ENCODE measurements at regions of chr13 and their contacts with region 1.

Region 1: GRCh38 chr13:46553886-46554858 is 1.2 kb downstream of the LRCH1 start:
- DNase-seq: peak; percentile 88
- ATAC-seq: peak; percentile 70
- H3K4me3 ChIP-seq: peak overlapping the region; percentile 98
- H3K27ac ChIP-seq: peak overlapping the region; percentile 90
- H3K4me1 ChIP-seq: peaks cover 15% of the 10 kb centered on the region
- H3K27me3 ChIP-seq: no peaks in the 10 kb centered on the region
- CTCF ChIP-seq: peak; percentile 37

Region 2: DNA sequence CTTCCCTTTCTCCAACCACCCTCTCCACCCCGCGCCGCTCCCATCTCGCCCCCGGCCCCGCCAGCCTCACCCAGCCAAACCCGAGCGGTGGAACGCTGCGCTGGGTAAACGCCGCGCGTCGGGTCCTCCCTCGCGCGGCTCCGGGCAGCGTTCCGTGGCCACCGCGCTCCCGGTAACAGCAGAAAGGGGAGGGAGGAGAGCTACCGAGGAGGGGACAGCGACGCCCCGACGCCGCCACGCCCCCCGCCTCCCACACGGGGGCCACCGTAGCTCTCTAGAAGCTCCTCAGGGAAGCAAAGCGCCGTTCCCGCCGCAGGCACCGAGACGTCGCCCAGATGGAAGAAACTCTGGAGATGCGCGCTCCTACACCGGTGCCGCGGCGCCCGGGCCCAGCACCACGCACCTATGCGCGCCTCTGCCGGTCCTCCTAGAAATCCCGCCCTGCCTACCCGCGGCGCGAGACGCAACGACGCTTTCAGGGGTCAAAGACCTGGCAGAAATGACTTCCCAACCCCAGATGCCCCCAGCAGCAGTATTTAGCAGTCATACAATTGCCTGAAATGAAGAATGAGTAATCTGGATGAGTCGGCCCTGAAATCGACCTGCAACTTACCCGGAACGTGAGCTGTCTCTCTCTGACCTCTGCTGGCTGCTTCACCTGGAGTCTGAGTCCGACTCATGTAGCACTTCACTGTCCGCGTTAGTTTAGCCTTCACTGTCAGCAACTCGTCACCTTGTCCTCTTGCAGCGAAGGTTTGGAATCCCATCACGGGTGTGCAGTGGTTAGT is 166.9 kb before region 1 on chr13 and contains the start of gene RUBCNL:
- intact Hi-C with region 1: no loop called
- DNase-seq: peak; percentile 78
- ATAC-seq: peak; percentile 80
- H3K4me3 ChIP-seq: peak within 1 kb of the TSS; percentile 57
- H3K27ac ChIP-seq: no peak within 1 kb of the TSS
- H3K4me1 ChIP-seq: peaks cover 22% of the 10 kb centered on the region
- H3K27me3 ChIP-seq: peaks cover 25% of the 10 kb centered on the region
- CTCF ChIP-seq: no peak
- total RNA-seq, gene RUBCNL: 2.9 TPM

Region 3: DNA sequence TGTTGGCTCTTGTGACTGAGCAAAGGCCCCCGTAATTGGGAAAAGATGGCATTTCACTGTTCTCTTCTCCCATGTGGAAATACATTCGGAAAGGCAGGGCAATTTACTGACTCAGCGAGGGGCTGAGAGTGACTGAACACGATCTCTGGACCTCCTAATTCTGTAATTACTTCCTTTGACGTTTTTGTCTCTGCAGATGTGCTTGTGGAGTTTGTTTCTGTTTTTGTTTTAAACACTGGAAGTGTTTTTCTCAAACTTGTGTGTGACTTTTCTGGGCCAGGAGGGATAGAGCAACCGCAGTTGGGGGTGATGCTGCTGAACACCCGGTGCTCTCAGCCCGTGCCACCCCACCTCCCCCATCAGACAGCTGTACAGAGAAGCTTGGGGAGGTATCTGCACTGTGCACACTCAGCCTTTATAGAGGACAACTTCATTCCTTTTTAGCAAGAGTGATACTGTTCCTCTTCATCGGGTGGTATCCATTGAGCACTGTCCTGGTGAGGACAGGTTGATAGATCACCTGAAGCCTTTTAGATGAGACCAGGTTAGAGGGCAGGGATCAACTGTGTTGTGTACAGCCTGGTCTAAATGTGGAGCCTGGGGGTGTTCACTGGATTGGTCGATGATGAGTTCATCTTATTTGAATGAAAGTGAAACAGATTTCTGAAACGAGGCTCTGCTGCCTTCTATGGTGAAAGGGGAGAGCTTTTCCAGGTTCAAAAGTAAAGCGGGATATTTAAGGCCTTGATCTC is 125.4 kb after region 1 on chr13:
- intact Hi-C with region 1: loop called (anchors 10 kb)
- DNase-seq: no peak
- ATAC-seq: peak; percentile 67
- H3K4me3 ChIP-seq: peak overlapping the region; percentile 30
- H3K27ac ChIP-seq: peak overlapping the region; percentile 17
- H3K4me1 ChIP-seq: peaks cover 22% of the 10 kb centered on the region
- H3K27me3 ChIP-seq: no peaks in the 10 kb centered on the region
- CTCF ChIP-seq: no peak

Region 4: DNA sequence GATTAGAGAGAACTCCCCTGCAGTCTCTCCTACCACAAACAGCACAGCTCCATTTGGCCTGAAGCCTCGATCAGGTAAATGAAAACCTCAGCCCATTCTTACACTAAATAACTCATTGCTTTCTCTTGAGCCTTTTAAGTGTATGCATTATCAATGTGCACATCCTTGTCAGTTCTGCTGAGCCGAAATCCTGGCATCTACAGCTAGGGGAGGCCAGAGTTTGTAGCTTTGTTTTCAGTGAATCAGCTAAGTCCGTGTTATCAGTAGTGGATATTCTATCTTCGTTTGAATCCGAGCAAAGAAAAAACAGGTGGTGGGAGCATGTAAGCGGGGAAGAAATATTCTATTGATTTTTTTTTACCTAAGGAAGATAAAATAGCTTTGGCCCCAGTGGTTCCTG is 158.4 kb after region 1 on chr13:
- intact Hi-C with region 1: loop called (anchors 10 kb)
- DNase-seq: no peak
- ATAC-seq: no peak
- H3K4me3 ChIP-seq: no peak overlapping the region
- H3K27ac ChIP-seq: no peak overlapping the region
- H3K4me1 ChIP-seq: no peaks in the 10 kb centered on the region
- H3K27me3 ChIP-seq: no peaks in the 10 kb centered on the region
- CTCF ChIP-seq: no peak

Region 5: DNA sequence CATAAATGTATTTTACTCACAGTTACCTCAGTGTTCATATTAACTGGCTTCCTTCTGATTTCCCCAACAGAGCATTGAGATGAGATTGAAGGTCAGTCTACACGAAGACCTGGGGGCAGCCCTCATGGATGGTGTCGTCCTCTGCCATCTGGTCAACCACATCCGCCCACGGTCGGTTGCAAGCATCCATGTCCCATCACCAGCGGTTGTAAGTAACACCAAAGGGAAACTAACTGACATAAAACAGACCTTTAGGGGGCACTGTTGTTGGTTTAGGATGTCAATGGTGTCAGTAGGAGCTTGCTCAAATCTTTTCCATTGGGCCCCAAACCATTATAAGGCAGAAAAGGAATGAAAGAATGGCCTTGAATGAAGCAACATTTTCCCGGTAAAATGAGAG is 174.6 kb after region 1 on chr13:
- intact Hi-C with region 1: no loop called
- DNase-seq: no peak
- ATAC-seq: peak; percentile 41
- H3K4me3 ChIP-seq: no peak overlapping the region
- H3K27ac ChIP-seq: no peak overlapping the region
- H3K4me1 ChIP-seq: no peaks in the 10 kb centered on the region
- H3K27me3 ChIP-seq: no peaks in the 10 kb centered on the region
- CTCF ChIP-seq: peak; percentile 18

Region 6: GRCh38 chr13:46751811-46752635 is 197.9 kb after region 1 on chr13:
- intact Hi-C with region 1: no loop called
- DNase-seq: no peak
- ATAC-seq: peak; percentile 91
- H3K4me3 ChIP-seq: no peak overlapping the region
- H3K27ac ChIP-seq: no peak overlapping the region
- H3K4me1 ChIP-seq: peaks cover 6% of the 10 kb centered on the region
- H3K27me3 ChIP-seq: no peaks in the 10 kb centered on the region
- CTCF ChIP-seq: peak; percentile 9

Region 7: GRCh38 chr13:46926916-46927590 is 372.9 kb after region 1 on chr13:
- intact Hi-C with region 1: no loop called
- DNase-seq: no peak
- ATAC-seq: no peak
- H3K4me3 ChIP-seq: no peak overlapping the region
- H3K27ac ChIP-seq: no peak overlapping the region
- H3K4me1 ChIP-seq: no peaks in the 10 kb centered on the region
- H3K27me3 ChIP-seq: no peaks in the 10 kb centered on the region
- CTCF ChIP-seq: no peak

Measured in upper lobe of right lung (tissue), 1 donor.